GM10248 (cell line): ENCODE measurements at regions of chr10 and their contacts with region 1.

Region 1: GRCh38 chr10:88810196-88810961 is 7.8 kb downstream of the LIPM start:
- DNase-seq: peak; percentile 35
- CTCF ChIP-seq: peak; percentile 62

Region 2: GRCh38 chr10:88565072-88565471 is 245.3 kb before region 1 on chr10:
- CTCF ChIA-PET with region 1: interaction called, 14 read pairs
- POLR2A ChIA-PET with region 1: no interaction called
- DNase-seq: peak; percentile 24
- CTCF ChIP-seq: peak; percentile 40

Region 3: DNA sequence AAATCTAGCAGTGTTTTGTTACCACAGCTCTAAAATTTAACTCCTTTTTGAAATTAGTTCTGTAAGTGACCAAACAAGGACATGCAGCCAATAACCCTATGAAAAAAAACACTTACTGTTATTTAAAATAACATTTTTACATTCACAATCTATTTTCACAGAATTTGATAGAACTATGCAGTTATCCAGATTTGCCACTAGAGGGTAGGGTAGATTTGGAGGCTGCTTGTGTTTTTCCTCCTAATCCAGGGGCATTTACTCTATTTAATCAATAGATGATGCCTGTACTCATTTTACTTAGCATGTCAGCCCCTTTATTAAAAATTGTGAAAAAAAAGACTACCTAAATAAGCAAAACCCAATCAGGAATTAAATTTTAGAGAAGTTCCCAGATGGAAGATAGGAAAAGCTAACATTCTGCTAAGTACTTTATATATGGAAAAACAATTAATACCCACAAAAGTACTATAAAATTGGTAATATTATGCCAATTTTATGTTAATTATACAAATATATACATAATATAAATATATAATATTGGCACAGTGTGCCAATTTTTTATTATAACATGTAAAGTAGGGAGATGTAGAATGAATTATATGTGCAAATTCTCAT is 122.4 kb before region 1 on chr10:
- CTCF ChIA-PET with region 1: interaction called, 13 read pairs
- POLR2A ChIA-PET with region 1: no interaction called
- DNase-seq: peak; percentile 38
- CTCF ChIP-seq: peak; percentile 64

Region 4: GRCh38 chr10:88793747-88794299 is 16.6 kb before region 1 on chr10:
- CTCF ChIA-PET with region 1: interaction called, 17 read pairs
- POLR2A ChIA-PET with region 1: no interaction called
- DNase-seq: peak; percentile 28
- CTCF ChIP-seq: no peak

Region 5: DNA sequence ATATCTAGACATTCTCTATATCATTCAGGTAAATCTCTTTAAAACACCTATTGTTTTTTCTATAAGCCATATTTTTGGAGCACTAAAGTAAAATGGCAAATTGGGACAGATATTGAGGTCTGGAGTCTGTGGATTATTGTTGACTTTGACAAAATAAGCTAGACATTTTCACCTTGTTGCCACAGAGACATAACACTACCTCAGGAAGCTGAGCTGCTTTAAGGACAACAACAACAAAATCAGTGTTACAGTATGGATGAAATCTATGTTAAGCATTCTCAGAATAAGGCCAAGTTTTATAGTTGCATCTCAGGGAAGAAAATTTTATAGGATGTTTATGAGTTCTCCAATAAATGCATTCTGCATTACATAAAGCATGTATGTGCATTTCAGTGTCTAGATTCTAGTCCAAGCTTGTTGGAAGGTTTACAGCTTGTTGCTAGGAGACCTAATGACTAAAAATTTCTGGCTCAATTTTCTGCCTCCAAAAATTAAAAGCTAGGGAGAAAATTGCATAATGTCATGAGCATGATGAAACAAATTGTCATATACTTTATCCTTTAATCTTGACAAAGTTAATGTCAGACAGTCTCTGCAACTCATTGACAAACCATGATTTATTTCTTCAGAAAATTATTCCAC is 10.5 kb after region 1 on chr10:
- CTCF ChIA-PET with region 1: interaction called, 21 read pairs
- POLR2A ChIA-PET with region 1: no interaction called
- DNase-seq: no peak
- CTCF ChIP-seq: no peak